Activated CD4-positive, alpha-beta T cell treated with anti-CD3 and anti-CD28 coated beads for 36 hours (primary cell): ENCODE measurements at regions of chr4 and their contacts with region 1.

Region 1: DNA sequence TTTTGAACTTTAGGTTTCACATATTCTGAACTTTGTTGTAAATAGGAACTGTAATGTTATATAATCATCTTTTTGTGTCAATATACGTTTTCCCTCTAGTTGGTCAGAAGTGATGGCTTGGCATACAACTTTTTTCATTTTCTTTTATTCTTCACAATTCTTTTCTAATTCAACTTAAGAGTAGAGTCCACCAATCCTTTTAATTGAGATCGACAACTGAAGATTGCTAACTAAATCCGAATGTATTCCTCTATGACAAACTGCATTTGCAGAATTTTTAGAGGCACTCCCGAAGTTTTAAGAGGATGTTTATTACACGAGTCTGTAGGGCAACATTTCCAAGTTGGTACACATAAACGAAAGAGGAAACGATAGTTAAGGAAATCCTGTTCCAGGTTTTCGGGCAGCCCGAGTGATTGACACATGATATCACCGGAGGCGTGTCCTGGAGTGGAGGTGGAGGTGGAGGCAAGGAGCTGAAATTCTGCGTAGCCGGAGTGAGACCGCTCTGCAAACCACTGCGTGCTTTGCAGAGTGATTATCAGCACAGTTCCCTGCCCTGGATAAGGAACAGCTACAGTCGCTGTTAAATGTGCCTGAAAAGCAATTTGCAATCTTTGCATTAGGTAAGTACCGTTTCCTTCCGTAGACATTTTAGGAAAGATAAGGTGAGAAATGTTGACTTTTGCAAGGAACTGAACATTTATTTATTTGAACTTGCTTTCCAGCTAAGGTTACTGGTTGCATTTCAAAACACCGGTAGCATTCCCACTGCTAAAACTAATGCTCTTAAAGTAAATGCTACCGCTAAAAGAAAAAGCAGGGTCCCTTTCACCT is at the start of gene SPRY1:
- DNase-seq: peak; percentile 90
- ATAC-seq: peak; percentile 63
- H3K4me3 Mint-ChIP-seq: peak within 1 kb of the TSS; percentile 81
- H3K27ac Mint-ChIP-seq: peak within 1 kb of the TSS; percentile 90
- H3K4me1 Mint-ChIP-seq: peaks cover 24% of the 10 kb centered on the region
- H3K27me3 Mint-ChIP-seq: peaks cover 5% of the 10 kb centered on the region
- total RNA-seq, gene SPRY1: 51.2 to 52.0 TPM

Region 2: DNA sequence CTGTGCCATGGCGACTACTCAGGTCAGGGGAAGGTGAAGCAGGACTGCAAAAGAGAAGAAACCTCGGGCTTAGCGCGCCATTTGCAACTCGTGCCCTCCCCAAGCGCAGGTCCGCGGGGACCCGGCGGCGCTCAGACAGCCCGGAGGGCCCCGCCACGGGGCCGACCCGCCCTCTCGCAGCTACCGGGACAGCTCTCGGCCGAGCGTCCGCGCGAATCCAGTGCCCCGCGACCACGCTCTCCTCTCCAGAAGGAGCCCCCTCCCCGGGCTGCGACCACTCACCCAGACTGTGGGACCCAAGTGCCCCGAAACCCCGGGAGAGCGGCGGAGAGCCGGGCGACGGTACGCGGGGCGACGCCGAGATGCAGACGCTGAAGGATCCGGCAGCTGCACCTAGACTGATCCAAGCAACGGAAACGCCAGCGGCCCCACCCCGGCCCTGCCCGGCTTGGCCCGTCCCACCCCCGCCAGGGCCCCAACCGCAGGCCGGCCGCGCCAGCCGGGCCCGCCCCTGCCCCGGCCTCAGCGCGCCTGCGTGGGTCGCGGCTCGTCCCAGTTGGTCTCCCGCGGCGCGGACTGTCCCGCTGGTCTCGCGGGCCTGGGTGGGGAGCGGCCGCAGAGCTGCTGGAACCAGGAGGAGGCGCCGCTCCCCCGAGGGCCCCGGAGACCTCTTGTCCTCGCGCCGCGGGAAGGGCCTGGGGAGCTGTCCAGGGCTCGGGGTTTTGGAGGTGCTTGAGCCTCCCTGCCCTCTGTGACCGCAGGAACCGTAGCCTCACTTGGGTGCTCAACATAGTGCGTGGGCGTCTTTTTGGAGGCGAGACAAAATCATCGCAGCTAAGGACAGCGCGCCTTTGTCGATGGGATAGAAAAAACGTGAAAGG is 1699.7 kb before region 1 on chr4 and contains the start of gene ANXA5:
- CTCF ChIA-PET with region 1: no interaction called
- POLR2A ChIA-PET with region 1: no interaction called
- intact Hi-C with region 1: loop called in 1 of 2 experiments (anchors 5 kb)
- DNase-seq: peak; percentile 86
- ATAC-seq: peak; percentile 87
- H3K4me3 Mint-ChIP-seq: peak within 1 kb of the TSS; percentile 95
- H3K27ac Mint-ChIP-seq: peak within 1 kb of the TSS; percentile 99
- H3K4me1 Mint-ChIP-seq: peaks cover 41% of the 10 kb centered on the region
- H3K27me3 Mint-ChIP-seq: peaks cover 26% of the 10 kb centered on the region
- total RNA-seq, gene ANXA5: 105 to 117 TPM

Region 3: DNA sequence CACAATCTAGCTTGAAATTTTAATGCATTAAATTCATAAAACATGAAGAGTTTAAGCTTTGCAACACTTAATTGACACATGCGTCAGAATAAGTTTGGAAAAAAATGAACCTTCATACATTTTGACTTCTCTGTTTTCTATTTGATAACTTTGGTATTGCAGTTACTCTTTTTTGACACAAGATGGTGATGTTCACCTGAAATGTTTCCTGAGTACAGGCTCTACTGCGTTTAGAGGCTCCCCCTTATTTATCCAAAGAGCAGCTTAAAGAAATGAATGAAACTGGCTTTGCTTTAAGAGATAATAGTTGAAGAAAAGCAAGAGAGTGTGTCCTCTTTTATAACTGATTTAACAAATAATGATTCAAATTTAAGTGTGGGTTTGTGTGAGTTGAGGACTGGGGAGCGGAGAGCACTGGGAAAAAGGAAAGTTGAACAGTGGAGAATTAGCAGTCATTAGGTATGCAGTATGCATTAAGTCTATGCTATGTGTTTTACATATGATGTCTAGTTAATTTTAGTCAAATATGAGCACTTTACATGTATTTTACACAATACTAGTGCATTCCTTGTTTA is 293.5 kb before region 1 on chr4:
- CTCF ChIA-PET with region 1: no interaction called
- POLR2A ChIA-PET with region 1: no interaction called
- intact Hi-C with region 1: loop called (anchors 5 to 10 kb)
- DNase-seq: no peak
- ATAC-seq: peak; percentile 68
- H3K4me3 Mint-ChIP-seq: no peak overlapping the region
- H3K27ac Mint-ChIP-seq: no peak overlapping the region
- H3K4me1 Mint-ChIP-seq: no peaks in the 10 kb centered on the region
- H3K27me3 Mint-ChIP-seq: no peaks in the 10 kb centered on the region

Region 4: GRCh38 chr4:123421227-123421936 is 24.9 kb after region 1 on chr4:
- CTCF ChIA-PET with region 1: interaction called, 5 read pairs
- POLR2A ChIA-PET with region 1: interaction called, 18 read pairs
- intact Hi-C with region 1: loop called (anchors 1 to 2 kb)
- DNase-seq: no peak
- ATAC-seq: peak; percentile 7
- H3K4me3 Mint-ChIP-seq: peak overlapping the region; percentile 60
- H3K27ac Mint-ChIP-seq: peak overlapping the region; percentile 97
- H3K4me1 Mint-ChIP-seq: peaks cover 68% of the 10 kb centered on the region
- H3K27me3 Mint-ChIP-seq: peaks cover 2% of the 10 kb centered on the region

Region 5: GRCh38 chr4:123520325-123520724 is 123.8 kb after region 1 on chr4:
- CTCF ChIA-PET with region 1: no interaction called
- POLR2A ChIA-PET with region 1: no interaction called
- intact Hi-C with region 1: no loop called
- DNase-seq: no peak
- ATAC-seq: no peak
- H3K4me3 Mint-ChIP-seq: no peak overlapping the region
- H3K27ac Mint-ChIP-seq: no peak overlapping the region
- H3K4me1 Mint-ChIP-seq: no peaks in the 10 kb centered on the region
- H3K27me3 Mint-ChIP-seq: no peaks in the 10 kb centered on the region

Region 6: GRCh38 chr4:123564758-123565346 is 168.3 kb after region 1 on chr4:
- CTCF ChIA-PET with region 1: interaction called, 11 read pairs
- POLR2A ChIA-PET with region 1: no interaction called
- intact Hi-C with region 1: loop called (anchors 2 to 10 kb)
- DNase-seq: peak; percentile 64
- ATAC-seq: peak; percentile 100
- H3K4me3 Mint-ChIP-seq: no peak overlapping the region
- H3K27ac Mint-ChIP-seq: no peak overlapping the region
- H3K4me1 Mint-ChIP-seq: peaks cover 2% of the 10 kb centered on the region
- H3K27me3 Mint-ChIP-seq: peaks cover 9% of the 10 kb centered on the region

Region 7: GRCh38 chr4:124111922-124112321 is 715.4 kb after region 1 on chr4:
- CTCF ChIA-PET with region 1: interaction called, 3 read pairs
- POLR2A ChIA-PET with region 1: no interaction called
- intact Hi-C with region 1: loop called in 1 of 2 experiments (anchors 10 kb)
- DNase-seq: no peak
- ATAC-seq: no peak
- H3K4me3 Mint-ChIP-seq: no peak overlapping the region
- H3K27ac Mint-ChIP-seq: no peak overlapping the region
- H3K4me1 Mint-ChIP-seq: no peaks in the 10 kb centered on the region
- H3K27me3 Mint-ChIP-seq: peaks cover 4% of the 10 kb centered on the region